ENCODE measurements at regions of chr2 and their contacts with region 1.

Region 1: GRCh38 chr2:161586517-161587167 is 37.6 kb upstream of the SLC4A10 start:
- DNase-seq: no peak
- H3K4me3 Mint-ChIP-seq: no peak overlapping the region
- H3K27ac Mint-ChIP-seq: no peak overlapping the region
- H3K4me1 Mint-ChIP-seq: no peaks in the 10 kb centered on the region
- H3K27me3 Mint-ChIP-seq: peaks cover 4% of the 10 kb centered on the region

Region 2: GRCh38 chr2:161609930-161610329 is 23.3 kb after region 1 on chr2:
- CTCF ChIA-PET with region 1: interaction called, 11 read pairs
- intact Hi-C with region 1: no loop called
- DNase-seq: no peak
- H3K4me3 Mint-ChIP-seq: no peak overlapping the region
- H3K27ac Mint-ChIP-seq: no peak overlapping the region
- H3K4me1 Mint-ChIP-seq: peaks cover 8% of the 10 kb centered on the region
- H3K27me3 Mint-ChIP-seq: peaks cover 10% of the 10 kb centered on the region

Region 3: DNA sequence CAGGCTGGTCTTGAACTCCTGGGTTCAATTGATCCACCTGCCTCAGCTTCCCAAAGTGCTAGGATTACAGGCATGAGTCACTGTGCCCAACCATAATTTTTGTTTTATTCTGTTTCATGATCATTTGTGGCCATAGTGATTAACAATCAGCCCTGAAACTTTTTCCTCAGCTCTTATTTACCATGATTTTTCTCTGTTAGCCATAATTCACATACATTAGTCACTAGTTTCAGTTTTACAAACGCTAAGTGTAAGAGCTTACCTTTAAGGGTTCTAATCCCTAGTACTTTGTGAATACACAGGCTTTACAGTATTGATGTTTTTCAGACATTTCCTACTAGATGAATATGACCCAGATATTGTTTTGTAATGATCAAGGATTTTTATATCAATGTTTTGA is 271.3 kb after region 1 on chr2:
- CTCF ChIA-PET with region 1: no interaction called
- intact Hi-C with region 1: loop called (anchors 5 kb)
- DNase-seq: peak; percentile 14
- H3K4me3 Mint-ChIP-seq: no peak overlapping the region
- H3K27ac Mint-ChIP-seq: no peak overlapping the region
- H3K4me1 Mint-ChIP-seq: peaks cover 4% of the 10 kb centered on the region
- H3K27me3 Mint-ChIP-seq: no peaks in the 10 kb centered on the region

Region 4: DNA sequence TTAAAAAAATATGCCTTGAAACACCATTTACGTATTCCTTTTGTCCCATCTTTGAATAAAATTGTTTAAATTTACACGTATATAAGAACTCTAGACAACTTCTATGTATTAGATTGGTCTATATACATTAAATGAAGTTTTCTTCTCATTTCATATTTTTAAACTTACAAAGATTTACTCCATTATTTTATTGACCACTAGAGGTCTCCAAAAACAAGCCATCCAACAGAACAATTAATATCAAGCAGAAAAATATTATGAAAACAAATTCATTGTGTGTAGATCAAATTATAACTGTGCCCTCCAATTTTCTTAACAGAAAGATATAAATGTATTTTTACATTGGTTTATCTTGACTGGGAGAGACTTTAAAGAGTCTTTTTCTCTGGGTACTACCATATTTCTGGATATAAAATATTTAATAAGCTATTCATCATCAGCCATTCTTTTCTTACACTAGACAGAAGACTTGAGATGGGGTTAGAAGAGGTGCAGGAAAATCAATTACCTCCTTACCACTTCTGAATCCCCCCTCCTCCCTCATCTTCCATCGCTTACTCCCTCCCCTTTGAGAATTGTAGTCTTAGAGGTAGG is 420.9 kb after region 1 on chr2:
- CTCF ChIA-PET with region 1: no interaction called
- intact Hi-C with region 1: loop called (anchors 5 kb)
- DNase-seq: no peak
- H3K4me3 Mint-ChIP-seq: no peak overlapping the region
- H3K27ac Mint-ChIP-seq: no peak overlapping the region
- H3K4me1 Mint-ChIP-seq: peaks cover 37% of the 10 kb centered on the region
- H3K27me3 Mint-ChIP-seq: no peaks in the 10 kb centered on the region

Region 5: GRCh38 chr2:162058973-162059668 is 472.5 kb after region 1 on chr2:
- CTCF ChIA-PET with region 1: no interaction called
- intact Hi-C with region 1: no loop called
- DNase-seq: peak; percentile 57
- H3K4me3 Mint-ChIP-seq: peak overlapping the region; percentile 44
- H3K27ac Mint-ChIP-seq: peak overlapping the region; percentile 89
- H3K4me1 Mint-ChIP-seq: peaks cover 88% of the 10 kb centered on the region
- H3K27me3 Mint-ChIP-seq: no peaks in the 10 kb centered on the region

Region 6: GRCh38 chr2:162301151-162301804 is 714.6 kb after region 1 on chr2:
- CTCF ChIA-PET with region 1: interaction called, 4 read pairs
- intact Hi-C with region 1: loop called (anchors 2 kb)
- DNase-seq: peak; percentile 71
- H3K4me3 Mint-ChIP-seq: no peak overlapping the region
- H3K27ac Mint-ChIP-seq: no peak overlapping the region
- H3K4me1 Mint-ChIP-seq: no peaks in the 10 kb centered on the region
- H3K27me3 Mint-ChIP-seq: no peaks in the 10 kb centered on the region

Measured in activated naive CD4-positive, alpha-beta T cell treated with anti-CD3 and anti-CD28 coated beads for 36 hours (primary cell).